Sciatic nerve (tissue), 2 donors: ENCODE measurements at regions of chr6 and their contacts with region 1.

Region 1: DNA sequence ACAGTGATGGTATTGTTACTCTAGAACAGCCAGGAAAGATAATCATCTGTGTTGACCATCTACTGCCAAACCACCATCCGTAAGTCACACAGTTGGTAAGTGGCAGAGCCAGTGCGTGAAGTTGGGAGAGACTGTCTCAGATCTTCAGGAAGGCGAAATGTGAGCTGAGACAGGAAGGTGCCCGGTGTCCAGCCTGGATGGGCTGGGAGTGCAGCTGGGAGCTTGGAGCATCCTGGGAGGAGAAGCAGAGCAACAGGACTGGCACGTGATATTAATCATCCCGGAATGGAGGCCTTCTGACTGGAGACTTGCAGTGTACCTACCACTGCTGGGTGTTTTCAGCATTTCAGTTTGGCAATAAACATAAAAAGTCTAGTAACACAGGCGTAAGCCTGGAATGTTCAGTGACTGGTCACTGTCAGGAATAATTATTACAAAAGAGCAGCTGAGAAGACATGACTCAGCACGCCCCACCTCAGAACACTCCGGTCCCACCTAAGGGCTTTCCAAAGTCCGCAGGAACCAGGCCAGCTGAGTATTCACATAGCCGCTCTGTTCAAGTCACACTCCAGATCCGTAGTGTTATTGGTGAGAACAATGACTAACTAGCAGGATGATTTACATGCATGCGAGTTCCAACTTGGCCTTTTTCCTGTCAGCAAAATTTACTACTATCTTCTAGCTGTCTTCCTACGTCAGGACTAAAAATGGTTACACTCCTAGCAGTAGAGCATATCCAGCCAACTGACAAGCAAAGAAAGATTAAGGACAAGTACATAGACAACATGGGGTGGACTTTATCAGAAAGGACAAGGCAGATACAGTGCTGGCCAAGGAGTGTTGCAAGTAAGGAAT is 45.1 kb upstream of the PNRC1 start:
- DNase-seq: peak; percentile 84
- ATAC-seq: peak; percentile 93

Region 2: GRCh38 chr6:89058627-89059026 is 23.1 kb after region 1 on chr6:
- intact Hi-C with region 1: loop called (anchors 2 kb)
- DNase-seq: no peak
- ATAC-seq: no peak

Region 3: GRCh38 chr6:89242574-89243330 is 207.3 kb after region 1 on chr6:
- intact Hi-C with region 1: no loop called
- DNase-seq: no peak
- ATAC-seq: no peak